ENCODE measurements at regions of chr7 and their contacts with region 1.

Region 1: DNA sequence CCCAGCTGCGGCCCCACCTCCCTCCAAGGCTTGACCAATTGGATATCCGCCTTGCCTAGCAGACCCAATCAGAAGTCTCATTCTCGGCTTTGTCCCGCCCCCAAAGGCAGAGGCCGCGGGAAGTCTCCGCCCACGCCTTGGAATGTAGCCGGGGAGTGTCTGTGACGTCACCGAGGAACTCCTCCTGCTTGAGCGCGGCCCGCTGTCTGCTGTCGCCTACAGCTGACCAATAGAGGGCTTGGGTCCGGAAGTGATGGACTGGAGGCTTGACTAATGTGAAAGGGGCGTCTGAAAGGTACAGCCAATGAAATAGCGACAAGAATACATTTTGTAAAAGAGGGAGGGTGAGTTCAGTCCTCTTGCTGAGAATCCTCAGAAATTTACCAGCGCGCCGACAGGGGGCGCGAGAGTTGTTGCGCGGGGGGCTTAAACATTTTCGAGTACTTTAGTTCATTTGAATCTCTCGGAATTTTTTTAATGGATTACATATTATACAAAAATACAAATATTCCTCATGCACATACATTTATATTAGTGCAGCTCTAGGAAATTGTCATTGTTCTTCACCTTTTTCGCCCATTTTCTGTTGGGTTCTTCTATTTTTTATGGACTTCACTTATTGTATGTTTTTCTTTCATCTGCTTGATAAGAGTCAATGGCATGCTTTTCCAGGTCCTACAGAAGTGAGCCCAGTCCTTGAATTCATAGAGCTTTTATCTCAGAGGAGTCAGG is 376 bp upstream of the CREB3L2 start:
- DNase-seq: peak; percentile 99
- ATAC-seq: peak; percentile 96
- H3K4me3 Mint-ChIP-seq: peak overlapping the region; percentile 87
- H3K27ac Mint-ChIP-seq: peak overlapping the region; percentile 94
- H3K4me1 Mint-ChIP-seq: peaks cover 30% of the 10 kb centered on the region
- H3K27me3 Mint-ChIP-seq: no peaks in the 10 kb centered on the region

Region 2: GRCh38 chr7:137920637-137921399 is 81.4 kb before region 1 on chr7:
- CTCF ChIA-PET with region 1: interaction called, 11 read pairs
- DNase-seq: no peak
- ATAC-seq: no peak
- H3K4me3 Mint-ChIP-seq: no peak overlapping the region
- H3K27ac Mint-ChIP-seq: no peak overlapping the region
- H3K4me1 Mint-ChIP-seq: peaks cover 25% of the 10 kb centered on the region
- H3K27me3 Mint-ChIP-seq: no peaks in the 10 kb centered on the region

Region 3: DNA sequence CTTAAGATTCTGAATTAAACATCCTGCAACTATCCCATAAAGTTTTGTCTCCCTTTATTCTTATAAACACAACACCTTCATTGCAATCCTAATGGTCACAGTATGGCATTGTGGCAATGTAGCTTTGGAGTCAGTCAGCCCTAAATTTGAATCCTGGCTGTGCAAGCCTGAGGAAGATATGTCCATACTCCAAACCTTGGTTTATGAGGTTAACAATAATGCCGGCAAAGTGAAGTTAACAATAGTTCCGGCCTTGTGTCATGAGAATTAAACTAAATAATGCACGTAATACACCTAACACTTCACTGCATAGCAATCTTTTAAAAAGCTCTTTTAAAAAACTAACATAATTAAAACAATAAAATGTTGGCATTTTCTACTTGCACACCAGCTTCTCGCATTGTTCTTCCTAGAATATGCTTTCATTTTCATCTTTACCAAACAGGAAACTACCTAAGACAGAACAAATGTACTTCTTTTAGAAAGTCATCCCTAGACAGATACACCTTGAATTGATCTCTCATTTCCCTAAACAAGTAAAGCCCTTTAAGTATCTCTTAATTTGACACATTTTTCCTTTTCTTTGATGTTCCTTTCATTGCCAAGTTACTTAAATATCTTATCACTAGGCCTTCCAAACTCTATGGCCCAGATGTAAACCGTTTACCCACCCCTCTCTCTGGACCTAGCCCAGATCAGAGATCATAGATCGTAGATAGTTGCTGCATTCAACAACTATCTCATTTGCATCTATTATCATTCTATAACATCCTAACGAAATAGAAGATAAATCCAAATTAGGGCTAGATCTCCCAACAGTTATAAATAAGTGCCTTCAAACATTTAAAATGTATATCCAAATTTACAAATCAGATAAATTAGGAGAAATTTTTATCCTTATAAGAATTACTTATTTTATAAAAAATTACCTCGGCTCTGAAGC is 67.0 kb before region 1 on chr7:
- CTCF ChIA-PET with region 1: interaction called, 24 read pairs
- DNase-seq: no peak
- ATAC-seq: peak; percentile 88
- H3K4me3 Mint-ChIP-seq: peak overlapping the region; percentile 79
- H3K27ac Mint-ChIP-seq: peak overlapping the region; percentile 94
- H3K4me1 Mint-ChIP-seq: peaks cover 33% of the 10 kb centered on the region
- H3K27me3 Mint-ChIP-seq: no peaks in the 10 kb centered on the region

Measured in activated CD8-positive, alpha-beta memory T cell treated with anti-CD3 and anti-CD28 coated beads, Interleukin-2, amount 10 ng/mL, durations not matched to agents 7 days and 5 days (primary cell).